Heart left ventricle (tissue), 16 donors: ENCODE measurements at regions of chr6 and their contacts with region 1.

Region 1: DNA sequence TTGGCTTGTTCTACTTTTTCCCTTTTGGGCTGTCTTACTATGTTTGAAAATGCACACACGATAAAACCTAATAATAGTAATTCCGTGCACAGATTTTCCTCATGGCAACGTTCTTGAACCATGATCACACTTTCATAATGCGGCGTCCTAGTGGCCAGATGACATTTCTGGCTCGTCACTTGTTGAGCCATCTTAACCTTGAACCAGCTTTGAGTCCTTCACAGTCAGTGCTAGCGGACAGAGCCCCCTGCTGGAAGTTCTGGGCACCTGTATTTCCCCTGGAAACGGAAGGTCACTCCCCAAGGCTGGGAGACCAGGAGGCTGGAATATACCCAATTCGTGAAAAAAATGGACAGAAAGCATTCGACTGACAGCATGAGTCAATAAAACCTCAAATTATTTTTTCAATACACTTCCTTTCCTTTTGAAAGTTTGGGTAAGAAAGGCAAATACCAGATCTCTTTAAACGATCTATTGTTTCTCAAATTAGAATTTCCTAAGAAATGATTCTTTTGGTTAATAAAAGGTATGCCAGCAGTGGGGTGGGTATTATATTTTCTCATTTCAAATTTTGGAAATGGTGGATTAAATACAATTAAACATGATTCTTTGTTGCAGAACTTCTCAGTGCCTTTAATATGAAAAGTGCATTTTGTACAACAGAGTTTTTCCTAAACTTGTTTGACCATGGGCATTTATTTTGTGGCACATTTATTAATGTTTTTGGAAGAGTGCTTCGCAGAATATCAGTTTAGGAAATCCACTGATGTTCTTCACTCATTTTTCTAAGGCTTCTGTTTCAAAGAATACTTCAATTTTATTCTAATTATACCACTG is 542.3 kb downstream of the QKI start:
- DNase-seq: peak; percentile 85 to 87 (median 86)
- ATAC-seq: peak; percentile 77 to 91 (median 90)
- H3K4me3 ChIP-seq: no peak overlapping the region
- H3K27ac ChIP-seq: peak overlapping the region in 9 of 12 donors; percentile 2 to 93 (median 32)
- H3K4me1 ChIP-seq: peaks cover 0 to 58% (median 16%) of the 10 kb centered on the region in 12 donors
- H3K27me3 ChIP-seq: no peaks in the 10 kb centered on the region
- CTCF ChIP-seq: peak; percentile 89 to 97 (median 94)
- POLR2A ChIP-seq: no peak

Region 2: GRCh38 chr6:163338671-163339405 is 618.0 kb before region 1 on chr6:
- intact Hi-C with region 1: loop called in 1 of 10 experiments (anchors 5 kb)
- DNase-seq: peak; percentile 66 to 74 (median 70)
- ATAC-seq: peak; percentile 62 to 73 (median 68)
- H3K4me3 ChIP-seq: no peak overlapping the region
- H3K27ac ChIP-seq: peak overlapping the region; percentile 71 to 97 (median 90)
- H3K4me1 ChIP-seq: peaks cover 10 to 74% (median 59%) of the 10 kb centered on the region in 12 donors
- H3K27me3 ChIP-seq: no peaks in the 10 kb centered on the region
- CTCF ChIP-seq: no peak
- POLR2A ChIP-seq: no peak

Region 3: DNA sequence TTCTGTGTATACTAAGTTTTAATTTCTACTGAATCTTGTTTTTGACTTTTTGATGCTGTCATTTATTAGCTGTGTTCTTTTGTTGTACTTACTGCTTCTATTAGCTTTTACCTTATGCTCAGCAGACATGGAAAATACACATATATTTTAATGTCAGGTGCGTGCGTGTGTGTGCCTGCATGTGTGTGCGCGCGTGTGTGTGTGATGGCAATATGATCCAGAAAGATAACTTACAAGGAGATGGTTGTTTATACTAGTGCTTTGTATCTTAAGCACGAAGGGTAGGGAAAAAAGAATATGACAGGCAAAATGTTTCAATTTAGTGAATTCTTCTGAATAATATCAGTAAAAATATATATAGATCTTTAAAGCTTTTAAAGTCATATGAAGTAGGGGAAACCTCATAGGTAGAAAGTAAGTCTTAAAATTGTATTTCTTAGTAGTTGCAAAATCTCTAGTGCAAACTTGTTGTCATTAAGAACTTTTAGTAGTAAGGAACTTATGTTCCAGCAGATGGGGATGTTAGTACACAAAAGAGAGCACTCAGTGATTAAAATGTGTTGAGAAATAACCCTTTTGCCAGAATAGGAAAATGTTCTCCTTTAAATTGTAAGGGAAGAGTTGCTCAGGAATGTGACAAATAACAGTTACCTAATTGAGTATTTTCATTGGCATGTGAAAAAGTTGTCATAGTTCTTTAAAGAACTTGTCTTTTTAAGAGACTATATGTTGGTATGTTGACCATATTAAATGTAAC is 529.1 kb before region 1 on chr6:
- intact Hi-C with region 1: loop called in 3 of 10 experiments (anchors 2 to 5 kb)
- DNase-seq: no peak
- ATAC-seq: peak in 2 of 4 donors; percentile 33 to 43
- H3K4me3 ChIP-seq: peak overlapping the region in 4 of 12 donors; percentile 2 to 10 (median 6)
- H3K27ac ChIP-seq: peak overlapping the region in 7 of 12 donors; percentile 4 to 49 (median 16)
- H3K4me1 ChIP-seq: peaks cover 27 to 100% (median 93%) of the 10 kb centered on the region in 12 donors
- H3K27me3 ChIP-seq: no peaks in the 10 kb centered on the region
- CTCF ChIP-seq: peak; percentile 18 to 64 (median 50)
- POLR2A ChIP-seq: no peak

Region 4: DNA sequence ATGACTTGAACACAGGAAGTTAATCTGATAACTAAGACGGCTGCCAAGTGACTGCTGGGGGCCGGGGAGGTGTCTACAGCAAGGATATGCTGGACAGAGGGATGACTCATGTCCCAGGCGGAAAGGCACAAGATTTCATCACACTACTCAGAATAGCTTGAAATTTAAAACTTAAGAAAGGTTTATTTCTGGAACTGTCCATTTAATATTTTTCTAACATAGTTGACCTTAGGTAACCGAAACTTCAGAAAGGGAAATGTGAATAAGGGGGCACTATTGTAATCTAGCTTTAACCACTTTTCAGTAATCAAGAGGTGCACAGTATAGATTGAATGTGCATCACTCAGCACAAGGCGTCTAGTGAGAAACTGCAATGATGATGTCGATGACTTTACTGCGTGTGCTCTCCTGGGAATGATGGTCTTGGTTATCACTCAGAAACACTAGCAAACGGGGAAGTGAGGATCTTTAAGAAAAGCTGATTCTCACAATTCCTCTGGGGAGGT is 370.8 kb before region 1 on chr6:
- intact Hi-C with region 1: loop called in 7 of 10 experiments (anchors 5 to 10 kb)
- DNase-seq: peak; percentile 54 to 82 (median 72)
- ATAC-seq: peak; percentile 47 to 88 (median 82)
- H3K4me3 ChIP-seq: peak overlapping the region in 1 of 12 donors; percentile 15
- H3K27ac ChIP-seq: peak overlapping the region in 9 of 12 donors; percentile 12 to 64 (median 39)
- H3K4me1 ChIP-seq: peaks cover 2 to 42% (median 19%) of the 10 kb centered on the region in 12 donors
- H3K27me3 ChIP-seq: no peaks in the 10 kb centered on the region
- CTCF ChIP-seq: no peak
- POLR2A ChIP-seq: no peak

Region 5: DNA sequence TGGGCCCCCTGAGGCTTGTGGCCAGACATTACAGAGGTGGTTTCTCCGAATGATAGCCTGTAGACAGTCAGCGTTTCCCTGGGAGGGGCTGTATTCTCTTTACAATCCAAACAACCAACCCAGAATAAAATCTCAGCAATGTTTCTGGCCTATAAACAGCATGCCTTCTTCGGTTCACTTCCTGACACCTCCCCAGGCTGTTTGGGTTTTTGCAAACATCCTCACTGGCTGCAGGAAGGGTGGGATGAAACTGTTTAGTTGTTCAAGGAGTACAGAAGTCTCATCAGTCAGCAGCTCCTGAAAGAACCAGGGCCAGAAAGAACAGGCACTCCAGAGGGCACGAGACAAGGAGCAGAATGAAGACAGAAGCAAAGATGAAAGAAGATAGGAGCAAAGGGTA is 192.2 kb before region 1 on chr6:
- intact Hi-C with region 1: loop called in 2 of 10 experiments (anchors 5 to 10 kb)
- DNase-seq: no peak
- ATAC-seq: peak; percentile 50 to 79 (median 74)
- H3K4me3 ChIP-seq: no peak overlapping the region
- H3K27ac ChIP-seq: peak overlapping the region in 10 of 12 donors; percentile 19 to 72 (median 54)
- H3K4me1 ChIP-seq: peaks cover 0 to 26% (median 15%) of the 10 kb centered on the region in 12 donors
- H3K27me3 ChIP-seq: no peaks in the 10 kb centered on the region
- CTCF ChIP-seq: no peak
- POLR2A ChIP-seq: no peak